Naive thymus-derived CD4-positive, alpha-beta T cell (primary cell): ENCODE measurements at regions of chr2 and their contacts with region 1.

Region 1: DNA sequence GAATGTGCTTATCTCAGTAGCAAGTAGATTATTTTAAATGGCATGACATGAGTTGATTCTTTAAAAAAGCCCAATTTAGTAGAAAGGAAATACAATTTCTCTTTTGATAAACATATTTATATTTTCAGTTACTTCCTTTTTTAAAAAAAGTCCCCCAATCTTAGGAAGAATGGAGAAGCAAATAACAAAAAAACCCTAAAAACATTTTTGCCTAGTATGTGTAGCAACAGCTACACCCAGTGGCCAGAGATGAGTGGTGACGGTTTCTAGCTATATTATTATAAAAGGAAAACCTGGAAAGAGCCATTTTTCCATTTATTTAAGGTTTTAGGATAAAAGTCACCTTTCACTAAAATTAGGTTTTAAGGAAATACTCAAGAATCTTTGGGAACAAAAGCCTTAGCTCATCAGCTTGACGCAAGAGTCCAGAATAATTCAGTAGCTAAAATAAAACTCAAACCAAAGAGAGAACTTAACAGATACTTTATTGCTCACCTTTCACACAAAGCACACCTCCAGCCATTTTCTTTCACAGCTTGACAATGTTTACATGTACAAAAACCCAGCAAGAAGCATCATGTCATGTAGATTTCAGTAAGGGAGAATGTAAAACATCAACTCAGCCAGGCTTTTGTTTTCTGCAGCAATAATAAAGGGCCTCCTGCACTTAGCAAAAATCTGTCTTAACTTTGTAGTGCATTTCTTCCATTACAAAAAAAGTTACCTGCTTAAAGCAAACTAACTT is 15.7 kb downstream of the FAM98A start:
- DNase-seq: peak in 6 of 9 donors; percentile 12 to 49 (median 36)
- ATAC-seq: peak; percentile 77
- H3K4me3 ChIP-seq: no peak overlapping the region
- H3K4me3 Mint-ChIP-seq: no peak overlapping the region
- H3K27ac ChIP-seq: no peak overlapping the region
- H3K27ac Mint-ChIP-seq: peak overlapping the region in 3 of 9 donors; percentile 47 to 61 (median 53)
- H3K4me1 ChIP-seq: peaks cover 0 to 5% of the 10 kb centered on the region in 2 donors
- H3K4me1 Mint-ChIP-seq: peaks cover 4 to 18% (median 10%) of the 10 kb centered on the region in 7 donors
- H3K27me3 ChIP-seq: no peaks in the 10 kb centered on the region
- H3K27me3 Mint-ChIP-seq: no peaks in the 10 kb centered on the region

Region 2: GRCh38 chr2:32553829-32554432 is 1029.4 kb before region 1 on chr2:
- CTCF ChIA-PET with region 1: interaction called, 3 read pairs
- POLR2A ChIA-PET with region 1: interaction called, 5 read pairs
- intact Hi-C with region 1: loop called (anchors 1 to 2 kb)
- DNase-seq: peak in 6 of 9 donors; percentile 9 to 44 (median 28)
- ATAC-seq: peak; percentile 80
- H3K4me3 ChIP-seq: no peak overlapping the region
- H3K4me3 Mint-ChIP-seq: no peak overlapping the region
- H3K27ac ChIP-seq: peak overlapping the region; percentile 29
- H3K27ac Mint-ChIP-seq: no peak overlapping the region
- H3K4me1 ChIP-seq: no peaks in the 10 kb centered on the region
- H3K4me1 Mint-ChIP-seq: no peaks in the 10 kb centered on the region
- H3K27me3 ChIP-seq: no peaks in the 10 kb centered on the region
- H3K27me3 Mint-ChIP-seq: no peaks in the 10 kb centered on the region

Region 3: DNA sequence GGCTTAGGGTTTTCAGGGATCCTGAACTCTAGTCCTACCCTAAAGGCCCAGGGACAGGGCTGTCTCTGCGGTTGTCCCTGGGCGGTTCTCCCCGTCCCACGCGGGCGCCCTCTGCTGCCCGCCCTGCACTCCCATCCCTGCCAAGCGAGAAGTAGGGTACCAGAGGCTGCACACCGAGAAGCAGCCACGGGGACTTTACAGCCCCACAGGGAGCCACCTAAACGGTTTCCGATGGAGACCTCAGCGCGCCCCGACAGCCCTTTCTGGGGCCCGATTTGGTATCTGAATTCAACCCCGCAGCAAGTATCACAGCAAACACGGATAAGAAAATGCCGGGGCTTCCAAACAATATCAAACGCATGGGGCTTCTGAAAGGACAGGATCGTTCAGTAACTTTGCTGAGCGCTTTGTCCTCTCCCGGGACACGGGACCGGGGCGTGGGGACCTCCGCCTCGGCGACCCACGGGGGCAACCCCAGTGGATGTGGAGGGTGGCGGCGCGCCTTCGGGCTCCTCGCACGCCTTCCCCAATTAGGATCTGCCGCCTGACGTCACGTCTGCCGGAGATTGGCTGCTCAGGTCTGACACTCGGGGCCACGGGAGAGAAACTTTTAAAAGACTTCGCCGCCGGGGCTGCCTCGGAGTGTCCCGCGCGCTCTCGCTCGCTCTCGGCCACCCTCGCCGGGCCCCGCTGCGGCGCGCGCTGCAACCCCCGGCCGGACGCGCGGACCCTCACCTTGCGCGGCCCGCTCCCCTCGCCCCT is 636.9 kb before region 1 on chr2 and contains the start of gene LTBP1:
- CTCF ChIA-PET with region 1: no interaction called
- POLR2A ChIA-PET with region 1: no interaction called
- intact Hi-C with region 1: loop called (anchors 5 to 10 kb)
- DNase-seq: peak; percentile 3 to 66 (median 18)
- ATAC-seq: peak; percentile 80
- H3K4me3 ChIP-seq: peak within 1 kb of the TSS; percentile 56
- H3K4me3 Mint-ChIP-seq: peak within 1 kb of the TSS; percentile 64 to 87 (median 81)
- H3K27ac ChIP-seq: no peak within 1 kb of the TSS
- H3K27ac Mint-ChIP-seq: peak within 1 kb of the TSS in 1 of 9 donors; percentile 55
- H3K4me1 ChIP-seq: no peaks in the 10 kb centered on the region
- H3K4me1 Mint-ChIP-seq: peaks cover 3 to 12% (median 5%) of the 10 kb centered on the region in 7 donors
- H3K27me3 ChIP-seq: peaks cover 0 to 7% of the 10 kb centered on the region in 2 donors
- H3K27me3 Mint-ChIP-seq: peaks cover 22 to 40% (median 36%) of the 10 kb centered on the region in 5 donors
- total RNA-seq, gene LTBP1: 0.29 to 2.1 TPM in 2 of 5 experiments, not detected in the others

Region 4: DNA sequence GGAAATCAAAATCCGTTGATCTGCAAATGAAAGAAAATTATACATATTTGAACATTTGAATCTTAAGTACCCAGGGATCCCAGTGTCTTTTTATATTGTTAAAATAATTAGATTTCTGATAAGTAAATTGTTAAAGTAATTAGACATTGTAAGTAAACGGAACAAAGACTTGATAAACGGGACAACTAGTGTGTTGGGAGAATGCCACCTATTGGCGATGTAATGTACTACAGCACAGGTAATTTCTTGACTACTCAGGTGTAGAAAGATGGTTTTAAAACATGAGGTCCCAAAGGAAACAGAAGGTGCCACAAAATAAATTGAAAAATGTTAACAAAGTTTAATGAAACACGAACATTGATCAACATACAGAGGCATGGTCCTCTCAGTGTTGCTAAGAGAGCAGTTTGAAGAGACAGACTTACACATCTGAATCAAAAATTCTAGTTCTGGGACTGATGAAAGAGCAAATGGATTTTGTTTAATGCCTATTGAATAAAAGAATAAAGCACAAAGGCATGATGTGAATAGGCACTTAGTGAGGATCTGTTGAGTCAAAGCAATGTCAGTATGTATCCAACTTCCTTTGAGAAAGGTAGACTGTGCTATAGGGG is 210.3 kb before region 1 on chr2:
- CTCF ChIA-PET with region 1: interaction called, 7 read pairs
- POLR2A ChIA-PET with region 1: no interaction called
- intact Hi-C with region 1: loop called (anchors 1 to 2 kb)
- DNase-seq: peak in 6 of 9 donors; percentile 2 to 33 (median 27)
- ATAC-seq: peak; percentile 58
- H3K4me3 ChIP-seq: no peak overlapping the region
- H3K4me3 Mint-ChIP-seq: no peak overlapping the region
- H3K27ac ChIP-seq: no peak overlapping the region
- H3K27ac Mint-ChIP-seq: no peak overlapping the region
- H3K4me1 ChIP-seq: no peaks in the 10 kb centered on the region
- H3K4me1 Mint-ChIP-seq: no peaks in the 10 kb centered on the region
- H3K27me3 ChIP-seq: no peaks in the 10 kb centered on the region
- H3K27me3 Mint-ChIP-seq: peaks cover 0 to 11% (median 0%) of the 10 kb centered on the region in 5 donors

Region 5: DNA sequence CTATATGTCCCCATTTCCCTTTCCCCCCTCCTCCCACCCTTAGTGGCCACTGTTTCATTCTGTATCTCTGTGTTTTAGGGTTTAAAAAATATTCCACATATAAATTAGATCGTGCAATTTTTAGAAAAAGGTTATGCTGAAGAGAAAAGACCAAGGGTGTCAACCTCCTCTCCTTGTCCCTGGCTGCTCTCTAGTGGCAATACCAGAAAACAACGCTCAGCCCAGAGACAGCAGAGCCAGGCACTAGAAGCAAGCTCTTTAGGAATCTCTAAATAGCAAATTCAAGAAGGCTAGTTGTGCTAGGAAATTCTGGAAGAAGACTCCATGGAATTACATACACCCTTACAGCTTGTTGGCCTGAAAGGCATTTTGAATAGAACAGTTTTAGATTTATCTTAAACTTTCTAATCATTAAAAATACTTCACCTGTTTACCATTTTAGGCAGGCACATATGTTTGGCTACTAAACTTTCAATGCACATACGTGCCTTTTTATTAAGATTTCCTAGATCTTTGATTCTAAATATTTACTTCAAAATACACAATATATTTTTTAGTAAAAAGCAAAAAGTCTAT is 142.0 kb before region 1 on chr2:
- CTCF ChIA-PET with region 1: interaction called, 3 read pairs
- POLR2A ChIA-PET with region 1: no interaction called
- intact Hi-C with region 1: loop called in 1 of 2 experiments (anchors 1 kb)
- DNase-seq: peak in 3 of 9 donors; percentile 1 to 21 (median 2)
- ATAC-seq: no peak
- H3K4me3 ChIP-seq: no peak overlapping the region
- H3K4me3 Mint-ChIP-seq: no peak overlapping the region
- H3K27ac ChIP-seq: no peak overlapping the region
- H3K27ac Mint-ChIP-seq: no peak overlapping the region
- H3K4me1 ChIP-seq: no peaks in the 10 kb centered on the region
- H3K4me1 Mint-ChIP-seq: no peaks in the 10 kb centered on the region
- H3K27me3 ChIP-seq: no peaks in the 10 kb centered on the region
- H3K27me3 Mint-ChIP-seq: peaks cover 0 to 23% (median 17%) of the 10 kb centered on the region in 5 donors

Region 6: GRCh38 chr2:33497221-33497650 is 86.1 kb before region 1 on chr2:
- CTCF ChIA-PET with region 1: no interaction called
- POLR2A ChIA-PET with region 1: no interaction called
- intact Hi-C with region 1: loop called in 1 of 2 experiments (anchors 1 kb)
- DNase-seq: no peak
- ATAC-seq: peak; percentile 71
- H3K4me3 ChIP-seq: no peak overlapping the region
- H3K4me3 Mint-ChIP-seq: peak overlapping the region in 2 of 10 donors; percentile 2 to 58
- H3K27ac ChIP-seq: no peak overlapping the region
- H3K27ac Mint-ChIP-seq: peak overlapping the region in 1 of 9 donors; percentile 47
- H3K4me1 ChIP-seq: peaks cover 0 to 26% of the 10 kb centered on the region in 2 donors
- H3K4me1 Mint-ChIP-seq: peaks cover 0 to 43% (median 18%) of the 10 kb centered on the region in 7 donors
- H3K27me3 ChIP-seq: no peaks in the 10 kb centered on the region
- H3K27me3 Mint-ChIP-seq: peaks cover 0 to 5% (median 0%) of the 10 kb centered on the region in 5 donors